Activated B cell treated with CpG ODN at 0.5 μM for 24 hours (primary cell): ENCODE measurements at regions of chr19 and their contacts with region 1.

Region 1: DNA sequence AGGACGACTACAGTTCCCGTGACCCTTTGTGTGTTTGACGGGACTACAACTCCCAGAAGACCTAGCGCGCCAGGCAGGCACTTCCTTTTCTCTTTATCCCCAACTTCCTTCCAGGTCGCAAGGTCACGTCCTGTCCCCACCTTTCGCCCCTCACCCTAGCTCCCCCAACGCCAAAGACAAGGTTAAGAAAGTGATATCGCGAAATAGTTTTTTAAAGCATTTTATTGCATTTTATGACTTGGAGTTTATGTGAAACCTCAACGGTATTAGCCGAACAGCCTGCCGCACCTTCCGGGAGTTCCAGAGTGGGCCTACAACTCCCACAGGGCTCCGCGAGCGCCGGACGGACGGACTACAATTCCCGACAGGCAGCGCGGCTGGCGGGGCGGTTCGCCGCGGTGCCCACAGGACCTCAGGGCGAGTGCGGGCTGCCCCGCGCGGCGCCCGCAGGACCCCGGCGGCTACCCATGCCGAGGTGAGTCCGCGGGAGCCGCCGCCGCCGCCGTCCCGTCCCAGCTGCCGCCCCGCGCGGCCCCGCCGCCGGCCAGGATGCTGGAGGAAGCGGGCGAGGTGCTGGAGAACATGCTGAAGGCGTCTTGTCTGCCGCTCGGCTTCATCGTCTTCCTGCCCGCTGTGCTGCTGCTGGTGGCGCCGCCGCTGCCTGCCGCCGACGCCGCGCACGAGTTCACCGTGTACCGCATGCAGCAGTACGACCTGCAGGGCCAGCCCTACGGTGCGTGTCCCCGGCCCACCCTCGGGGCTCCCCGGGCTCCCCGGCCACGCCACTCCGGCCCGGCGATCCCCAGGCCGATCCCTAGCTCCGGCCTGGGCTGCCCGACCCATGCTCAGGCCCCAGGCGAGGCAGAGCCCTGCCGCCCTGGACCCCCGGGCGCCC is at the start of gene NCLN:
- DNase-seq: peak; percentile 98
- ATAC-seq: peak; percentile 86
- H3K4me3 Mint-ChIP-seq: peak within 1 kb of the TSS; percentile 93
- H3K27ac Mint-ChIP-seq: peak within 1 kb of the TSS; percentile 95
- H3K4me1 Mint-ChIP-seq: peaks cover 74% of the 10 kb centered on the region
- H3K27me3 Mint-ChIP-seq: no peaks in the 10 kb centered on the region
- CTCF ChIP-seq: no peak
- total RNA-seq, gene NCLN: 61.1 and 64.8 TPM in 2 replicates

Region 2: DNA sequence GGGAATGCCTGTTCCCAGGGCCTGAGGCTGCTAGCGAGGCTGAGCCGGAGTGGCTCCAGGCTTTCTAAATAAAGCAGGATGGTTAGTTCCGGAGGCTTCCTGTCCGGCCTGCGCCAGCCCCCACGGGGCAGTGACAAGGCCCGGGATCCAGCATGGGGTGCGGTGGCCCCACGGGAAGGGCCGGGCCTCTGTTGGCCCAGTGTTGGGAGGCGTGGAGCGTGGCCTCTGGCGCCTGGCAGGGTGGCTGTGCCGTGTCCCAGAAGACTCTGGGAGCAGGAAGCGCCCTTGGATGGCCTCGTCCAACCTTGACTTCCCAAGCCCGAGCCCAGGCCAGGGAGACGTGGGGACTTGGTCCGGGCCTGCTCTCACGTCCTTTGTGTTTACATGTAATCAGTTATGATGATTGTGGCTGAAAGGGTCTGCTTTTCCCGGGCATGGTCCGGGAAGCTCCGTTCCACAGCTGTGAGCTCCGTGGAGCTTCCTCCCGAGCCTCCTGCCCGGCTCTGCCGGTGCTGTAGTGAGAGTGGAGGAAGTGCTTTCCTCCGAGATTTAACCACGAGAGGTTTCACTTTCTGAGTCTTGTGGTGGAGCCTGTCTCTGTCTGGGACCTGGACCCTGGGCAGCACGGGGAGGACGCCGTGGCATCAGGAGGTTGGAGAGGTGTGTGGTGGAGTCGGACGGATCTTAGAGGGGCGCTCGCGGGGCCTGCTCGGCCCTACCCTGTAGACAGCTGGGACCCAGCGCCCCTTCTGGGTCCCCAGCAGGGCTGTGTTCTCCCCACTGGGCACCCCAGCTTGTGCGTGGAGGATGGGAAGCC is 87.0 kb before region 1 on chr19:
- CTCF ChIA-PET with region 1: no interaction called
- POLR2A ChIA-PET with region 1: no interaction called
- intact Hi-C with region 1: no loop called
- DNase-seq: no peak
- ATAC-seq: peak; percentile 11
- H3K4me3 Mint-ChIP-seq: peak overlapping the region; percentile 66
- H3K27ac Mint-ChIP-seq: no peak overlapping the region
- H3K4me1 Mint-ChIP-seq: peaks cover 34% of the 10 kb centered on the region
- H3K27me3 Mint-ChIP-seq: no peaks in the 10 kb centered on the region
- CTCF ChIP-seq: no peak

Region 3: DNA sequence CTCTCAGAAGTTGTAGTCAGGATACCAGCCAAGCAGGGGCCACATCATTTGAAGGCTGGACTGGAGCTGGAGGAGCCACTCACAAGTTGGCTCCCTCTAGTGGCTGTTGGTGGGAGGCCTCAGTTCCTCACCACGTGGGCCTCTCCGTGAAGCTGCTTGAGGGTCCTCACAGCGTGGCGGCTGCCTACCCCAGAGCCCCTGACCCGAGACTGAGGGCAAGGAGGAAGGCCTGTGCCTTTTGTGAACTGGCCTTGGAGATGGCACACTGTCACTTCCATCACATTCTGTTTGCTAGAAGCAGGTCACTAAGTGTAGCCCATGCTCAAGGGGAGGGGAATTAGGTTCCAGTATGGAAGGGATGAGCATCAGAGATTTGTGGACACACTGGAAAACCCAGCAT is 77.0 kb before region 1 on chr19:
- CTCF ChIA-PET with region 1: no interaction called
- POLR2A ChIA-PET with region 1: no interaction called
- intact Hi-C with region 1: no loop called
- DNase-seq: peak; percentile 61
- ATAC-seq: peak; percentile 76
- H3K4me3 Mint-ChIP-seq: no peak overlapping the region
- H3K27ac Mint-ChIP-seq: no peak overlapping the region
- H3K4me1 Mint-ChIP-seq: peaks cover 11% of the 10 kb centered on the region
- H3K27me3 Mint-ChIP-seq: no peaks in the 10 kb centered on the region
- CTCF ChIP-seq: no peak

Region 4: DNA sequence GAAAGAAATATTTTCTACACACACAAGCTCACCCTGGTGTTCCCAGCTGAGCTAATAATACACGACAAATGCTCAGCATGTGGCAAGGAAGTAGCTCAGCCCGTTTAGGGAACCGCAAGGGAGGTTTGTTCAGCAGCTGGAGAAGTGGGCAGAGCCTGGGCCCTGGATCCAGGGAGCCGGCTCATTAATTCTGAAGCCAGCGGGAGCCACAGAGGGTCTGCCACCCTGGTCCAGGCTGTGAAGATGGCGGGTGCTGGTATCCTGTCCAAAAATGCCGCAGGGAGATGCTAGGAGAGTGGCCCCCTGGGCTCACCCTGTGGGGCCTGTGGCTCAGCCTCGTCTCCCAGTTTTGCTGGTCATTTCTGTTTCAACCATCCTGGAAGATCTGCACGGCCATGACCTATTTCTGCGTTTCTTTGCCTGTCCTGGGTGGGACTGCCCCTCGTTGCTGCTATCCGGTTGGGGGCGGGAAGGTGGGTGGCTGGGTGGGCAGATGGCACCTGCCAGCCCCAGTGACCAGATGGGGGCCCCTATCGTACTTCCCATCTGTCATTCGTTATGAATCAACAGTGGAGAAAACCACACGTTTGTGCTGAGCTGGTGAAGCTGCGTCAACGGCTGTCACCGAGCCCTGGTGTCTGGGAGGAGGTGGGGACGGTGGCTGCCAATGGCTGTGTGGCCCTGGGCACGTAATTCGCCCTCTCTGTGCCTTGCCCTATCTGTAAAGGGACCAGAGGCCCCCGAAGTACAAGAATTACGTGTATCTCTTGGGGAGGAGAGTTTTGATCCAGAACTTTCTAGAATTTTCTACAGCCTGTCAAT is 52.5 kb before region 1 on chr19:
- CTCF ChIA-PET with region 1: no interaction called
- POLR2A ChIA-PET with region 1: interaction called, 4 read pairs
- intact Hi-C with region 1: loop called (anchors 2 kb)
- DNase-seq: peak; percentile 41
- ATAC-seq: peak; percentile 87
- H3K4me3 Mint-ChIP-seq: peak overlapping the region; percentile 62
- H3K27ac Mint-ChIP-seq: peak overlapping the region; percentile 46
- H3K4me1 Mint-ChIP-seq: peaks cover 26% of the 10 kb centered on the region
- H3K27me3 Mint-ChIP-seq: peaks cover 5% of the 10 kb centered on the region
- CTCF ChIP-seq: no peak

Region 5: GRCh38 chr19:3284759-3285646 is 99.3 kb after region 1 on chr19:
- CTCF ChIA-PET with region 1: no interaction called
- POLR2A ChIA-PET with region 1: no interaction called
- intact Hi-C with region 1: no loop called
- DNase-seq: peak; percentile 22
- ATAC-seq: peak; percentile 63
- H3K4me3 Mint-ChIP-seq: no peak overlapping the region
- H3K27ac Mint-ChIP-seq: no peak overlapping the region
- H3K4me1 Mint-ChIP-seq: peaks cover 9% of the 10 kb centered on the region
- H3K27me3 Mint-ChIP-seq: peaks cover 33% of the 10 kb centered on the region
- CTCF ChIP-seq: no peak

Region 6: DNA sequence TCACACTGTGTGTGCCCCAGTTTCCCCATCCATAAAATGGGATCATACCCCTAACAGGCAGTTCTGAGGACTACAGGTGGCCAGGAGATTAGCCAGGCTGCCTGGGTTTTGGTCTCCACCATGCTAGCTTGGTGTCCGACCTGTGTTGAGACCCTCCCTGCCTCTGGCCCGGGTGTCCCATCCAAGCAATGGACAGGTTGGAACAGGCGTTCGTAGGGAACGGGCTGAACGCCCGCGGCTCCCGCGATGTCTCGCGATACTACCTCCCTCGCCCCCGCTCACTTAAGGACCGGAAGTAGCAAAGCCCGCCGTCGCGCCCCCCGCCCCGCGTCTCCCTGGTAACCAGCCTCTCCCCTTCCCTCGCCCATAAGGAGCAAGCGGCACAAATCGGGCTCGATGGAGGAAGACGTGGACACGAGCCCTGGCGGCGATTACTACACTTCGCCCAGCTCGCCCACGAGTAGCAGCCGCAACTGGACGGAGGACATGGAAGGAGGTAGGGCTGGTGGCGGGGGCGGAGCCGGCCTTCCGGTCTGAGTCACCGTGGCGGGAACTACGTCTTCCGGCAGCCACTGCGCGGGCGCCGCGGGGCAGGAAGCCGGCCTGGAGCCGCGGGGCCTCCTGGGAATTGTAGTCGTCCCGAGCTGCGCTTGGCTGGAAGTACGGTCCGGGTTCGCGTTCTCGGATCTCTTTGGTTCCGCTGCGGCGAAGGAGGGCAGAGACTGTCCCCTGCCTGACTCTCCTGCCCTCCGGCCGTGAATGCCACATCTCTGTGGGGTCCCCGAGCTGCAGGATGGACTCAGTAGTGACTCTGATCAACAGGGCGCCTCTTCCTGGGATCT is 249.2 kb after region 1 on chr19:
- CTCF ChIA-PET with region 1: no interaction called
- POLR2A ChIA-PET with region 1: no interaction called
- intact Hi-C with region 1: loop called (anchors 1 kb)
- DNase-seq: peak; percentile 98
- ATAC-seq: peak; percentile 92
- H3K4me3 Mint-ChIP-seq: peak overlapping the region; percentile 99
- H3K27ac Mint-ChIP-seq: peak overlapping the region; percentile 99
- H3K4me1 Mint-ChIP-seq: peaks cover 17% of the 10 kb centered on the region
- H3K27me3 Mint-ChIP-seq: no peaks in the 10 kb centered on the region
- CTCF ChIP-seq: no peak